Stomach (tissue), 19 donors: ENCODE measurements at regions of chr1 and their contacts with region 1.

Region 1: DNA sequence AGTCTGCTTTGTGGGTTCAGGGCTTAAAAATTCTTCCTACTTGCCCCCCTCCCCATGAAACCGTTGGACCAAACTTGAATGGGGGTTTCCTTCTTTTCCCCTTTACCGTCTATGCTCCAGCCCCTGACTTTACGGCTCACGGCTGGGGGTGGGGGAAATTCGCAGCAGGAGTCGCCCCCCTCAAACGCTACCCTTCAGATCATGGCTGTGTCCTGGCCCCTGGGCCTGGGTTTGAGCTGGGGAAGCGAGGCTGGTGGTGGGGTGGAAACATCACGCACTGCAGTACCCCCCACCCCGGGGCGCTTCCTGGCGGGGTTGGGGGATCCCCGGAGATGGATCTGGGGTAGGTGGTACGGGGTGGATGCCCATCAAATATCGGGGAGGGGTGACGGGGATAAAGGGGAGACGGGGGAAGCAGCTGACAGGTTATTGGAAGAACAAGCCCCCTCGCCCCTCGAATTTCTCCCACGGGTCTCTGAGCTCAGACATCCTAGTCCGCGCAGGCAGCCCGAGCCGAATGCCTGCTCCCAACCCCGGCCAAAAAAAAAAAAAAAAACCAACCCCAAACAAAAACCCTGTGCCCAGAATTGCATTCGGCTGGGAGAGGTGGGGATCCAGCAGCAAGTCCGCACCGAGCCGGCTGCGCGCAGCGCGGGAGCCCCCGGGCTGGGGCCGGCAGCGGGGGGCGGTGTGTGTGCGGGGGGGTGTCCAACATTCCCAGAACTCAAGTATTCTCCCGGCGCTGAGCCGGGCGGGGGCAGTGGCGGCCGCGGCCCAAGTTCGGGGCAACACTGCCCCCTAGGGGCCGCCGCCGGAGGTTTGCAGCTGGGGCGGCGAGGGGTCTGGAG is 59.0 kb upstream of the ACOT11 start:
- DNase-seq: peak; percentile 82 to 95
- H3K4me3 ChIP-seq: peak overlapping the region; percentile 54 to 63 (median 59)
- H3K27ac ChIP-seq: peak overlapping the region; percentile 82 to 95 (median 87)
- H3K4me1 ChIP-seq: peaks cover 30 to 52% (median 39%) of the 10 kb centered on the region in 4 donors
- H3K27me3 ChIP-seq: no peaks in the 10 kb centered on the region
- CTCF ChIP-seq: peak in 5 of 7 experiments; percentile 86 to 98 (median 91)
- EP300 ChIP-seq: no peak
- POLR2A ChIP-seq: no peak

Region 2: DNA sequence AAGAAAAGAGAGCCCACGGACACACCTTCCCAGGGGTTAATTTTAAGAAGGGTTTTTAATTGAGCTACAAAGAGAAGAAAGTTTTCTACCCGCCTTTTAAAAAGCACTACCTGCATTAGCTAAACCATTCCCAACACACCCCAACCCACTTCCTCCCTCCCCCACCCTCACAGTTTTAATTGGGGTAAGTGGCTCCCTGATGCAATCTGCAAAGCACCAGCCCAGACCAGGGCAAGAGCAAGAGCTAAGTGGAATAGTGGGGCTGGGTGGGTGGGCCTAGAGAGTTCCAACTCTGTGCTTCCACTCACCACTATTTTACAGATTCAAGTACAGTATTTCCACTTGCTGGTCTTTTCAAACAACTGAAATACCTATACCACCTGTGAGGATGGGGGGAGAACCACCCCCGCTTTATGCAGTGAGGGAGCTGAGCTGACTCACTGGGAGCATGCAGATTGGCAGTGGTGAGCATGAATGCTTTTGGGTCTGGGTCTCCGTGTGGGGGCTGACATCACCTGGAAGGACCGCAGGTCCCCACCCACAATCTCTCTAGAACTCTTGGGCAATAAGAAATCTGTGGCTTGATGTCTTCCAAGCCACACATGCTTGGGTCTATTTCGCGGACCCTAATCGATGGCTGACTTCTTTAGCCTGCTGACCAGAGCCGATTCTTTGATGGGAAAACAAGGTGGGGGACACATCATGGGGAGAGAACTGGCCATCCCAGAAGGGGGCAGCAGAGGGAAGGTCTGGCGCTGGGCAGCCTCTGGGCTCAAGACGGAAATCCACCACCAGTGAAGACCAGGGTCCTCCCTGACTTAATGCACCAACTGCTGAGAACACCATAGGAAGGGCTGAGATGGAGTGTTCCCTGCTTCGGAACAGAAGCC is 178.3 kb before region 1 on chr1:
- intact Hi-C with region 1: no loop called
- DNase-seq: peak; percentile 64 to 76
- H3K4me3 ChIP-seq: no peak overlapping the region
- H3K27ac ChIP-seq: peak overlapping the region in 2 of 5 donors; percentile 67 to 77
- H3K4me1 ChIP-seq: peaks cover 51 to 94% (median 73%) of the 10 kb centered on the region in 4 donors
- H3K27me3 ChIP-seq: no peaks in the 10 kb centered on the region
- CTCF ChIP-seq: peak in 5 of 7 experiments; percentile 23 to 58 (median 42)
- EP300 ChIP-seq: no peak
- POLR2A ChIP-seq: no peak

Region 3: DNA sequence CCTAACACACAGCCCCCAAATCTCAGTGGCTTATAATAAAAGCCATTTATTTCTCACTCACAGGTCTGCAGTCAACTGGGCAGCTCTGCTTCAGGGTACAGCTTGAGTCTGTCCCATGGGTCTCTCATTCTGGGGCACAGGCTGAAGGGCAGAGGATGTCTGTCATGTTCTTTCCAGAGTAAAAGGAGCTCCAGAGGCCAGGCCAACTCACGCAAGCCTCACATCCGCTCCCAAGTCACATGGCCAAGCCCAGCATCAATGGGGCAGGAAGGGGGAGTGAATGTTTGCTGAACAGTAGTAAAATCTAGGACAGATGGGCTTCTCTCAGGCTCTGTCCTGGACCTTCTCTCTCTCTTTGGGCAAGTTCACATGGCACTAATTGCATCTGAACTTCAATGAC is 75.7 kb before region 1 on chr1:
- intact Hi-C with region 1: loop called (anchors 5 kb)
- DNase-seq: peak; percentile 32 to 80
- H3K4me3 ChIP-seq: no peak overlapping the region
- H3K27ac ChIP-seq: peak overlapping the region in 3 of 5 donors; percentile 6 to 53 (median 37)
- H3K4me1 ChIP-seq: peaks cover 11 to 30% (median 17%) of the 10 kb centered on the region in 4 donors
- H3K27me3 ChIP-seq: no peaks in the 10 kb centered on the region
- CTCF ChIP-seq: no peak
- EP300 ChIP-seq: no peak
- POLR2A ChIP-seq: no peak

Region 4: GRCh38 chr1:55007625-55008024 is 518.6 kb after region 1 on chr1:
- intact Hi-C with region 1: no loop called
- DNase-seq: no peak
- H3K4me3 ChIP-seq: no peak overlapping the region
- H3K27ac ChIP-seq: no peak overlapping the region
- H3K4me1 ChIP-seq: no peaks in the 10 kb centered on the region
- H3K27me3 ChIP-seq: peaks cover 0 to 10% (median 0%) of the 10 kb centered on the region in 3 donors
- CTCF ChIP-seq: no peak
- EP300 ChIP-seq: no peak
- POLR2A ChIP-seq: no peak